Naive thymus-derived CD4-positive, alpha-beta T cell (primary cell): ENCODE measurements at regions of chr10 and their contacts with region 1.

Region 1: GRCh38 chr10:67764012-67764822 is 68.2 kb upstream of the CTNNA3 start:
- DNase-seq: peak; percentile 96 to 99 (median 98)
- ATAC-seq: peak; percentile 88
- H3K4me3 ChIP-seq: peak overlapping the region; percentile 99
- H3K4me3 Mint-ChIP-seq: peak overlapping the region; percentile 81 to 99 (median 94)
- H3K27ac ChIP-seq: peak overlapping the region; percentile 81
- H3K27ac Mint-ChIP-seq: peak overlapping the region; percentile 95 to 100 (median 100)
- H3K4me1 ChIP-seq: peaks cover 4 to 6% of the 10 kb centered on the region in 2 donors
- H3K4me1 Mint-ChIP-seq: peaks cover 0 to 37% (median 14%) of the 10 kb centered on the region in 7 donors
- H3K27me3 ChIP-seq: no peaks in the 10 kb centered on the region
- H3K27me3 Mint-ChIP-seq: peaks cover 0 to 16% (median 0%) of the 10 kb centered on the region in 5 donors

Region 2: GRCh38 chr10:67612577-67613537 is 151.4 kb before region 1 on chr10:
- CTCF ChIA-PET with region 1: no interaction called
- POLR2A ChIA-PET with region 1: no interaction called
- intact Hi-C with region 1: loop called (anchors 1 kb)
- DNase-seq: peak in 8 of 9 donors; percentile 53 to 82 (median 73)
- ATAC-seq: peak; percentile 97
- H3K4me3 ChIP-seq: peak overlapping the region; percentile 36
- H3K4me3 Mint-ChIP-seq: peak overlapping the region; percentile 64 to 83 (median 75)
- H3K27ac ChIP-seq: no peak overlapping the region
- H3K27ac Mint-ChIP-seq: peak overlapping the region; percentile 8 to 88 (median 79)
- H3K4me1 ChIP-seq: peaks cover 17 to 24% of the 10 kb centered on the region in 2 donors
- H3K4me1 Mint-ChIP-seq: peaks cover 23 to 44% (median 33%) of the 10 kb centered on the region in 7 donors
- H3K27me3 ChIP-seq: no peaks in the 10 kb centered on the region
- H3K27me3 Mint-ChIP-seq: peaks cover 0 to 29% (median 0%) of the 10 kb centered on the region in 5 donors

Region 3: GRCh38 chr10:67725567-67725966 is 38.6 kb before region 1 on chr10:
- CTCF ChIA-PET with region 1: no interaction called
- POLR2A ChIA-PET with region 1: no interaction called
- intact Hi-C with region 1: loop called in 1 of 2 experiments (anchors 2 kb)
- DNase-seq: no peak
- ATAC-seq: no peak
- H3K4me3 ChIP-seq: no peak overlapping the region
- H3K4me3 Mint-ChIP-seq: no peak overlapping the region
- H3K27ac ChIP-seq: no peak overlapping the region
- H3K27ac Mint-ChIP-seq: no peak overlapping the region
- H3K4me1 ChIP-seq: no peaks in the 10 kb centered on the region
- H3K4me1 Mint-ChIP-seq: no peaks in the 10 kb centered on the region
- H3K27me3 ChIP-seq: no peaks in the 10 kb centered on the region
- H3K27me3 Mint-ChIP-seq: peaks cover 0 to 11% (median 6%) of the 10 kb centered on the region in 5 donors

Region 4: DNA sequence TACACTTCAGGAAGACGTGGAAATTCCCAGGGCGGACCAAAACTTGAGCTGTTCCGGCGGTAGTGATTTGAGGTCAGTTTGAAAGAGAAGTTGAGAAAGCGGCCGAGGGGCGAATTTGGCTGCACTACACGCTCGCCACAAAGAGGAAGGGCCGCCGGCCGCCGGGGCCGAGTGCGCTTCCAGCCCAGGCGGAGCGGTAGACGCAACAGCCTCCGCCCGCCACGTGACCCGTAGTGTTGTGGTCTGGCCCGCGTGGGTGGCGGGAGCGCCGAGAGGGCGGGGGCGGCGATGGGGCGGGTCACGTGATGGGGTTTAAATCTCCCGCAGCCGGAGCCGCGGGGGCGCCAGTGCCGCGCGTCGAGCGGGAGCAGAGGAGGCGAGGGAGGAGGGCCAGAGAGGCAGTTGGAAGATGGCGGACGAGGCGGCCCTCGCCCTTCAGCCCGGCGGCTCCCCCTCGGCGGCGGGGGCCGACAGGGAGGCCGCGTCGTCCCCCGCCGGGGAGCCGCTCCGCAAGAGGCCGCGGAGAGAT is 120.2 kb after region 1 on chr10 and contains the start of gene SIRT1:
- CTCF ChIA-PET with region 1: no interaction called
- POLR2A ChIA-PET with region 1: interaction called, 3 read pairs
- intact Hi-C with region 1: loop called in 1 of 2 experiments (anchors 1 kb)
- DNase-seq: peak; percentile 87 to 95 (median 90)
- ATAC-seq: peak; percentile 89
- H3K4me3 ChIP-seq: peak within 1 kb of the TSS; percentile 75
- H3K4me3 Mint-ChIP-seq: peak within 1 kb of the TSS; percentile 86 to 98 (median 95)
- H3K27ac ChIP-seq: peak within 1 kb of the TSS; percentile 83
- H3K27ac Mint-ChIP-seq: peak within 1 kb of the TSS; percentile 90 to 98 (median 95)
- H3K4me1 ChIP-seq: peaks cover 12 to 16% of the 10 kb centered on the region in 2 donors
- H3K4me1 Mint-ChIP-seq: peaks cover 27 to 43% (median 35%) of the 10 kb centered on the region in 7 donors
- H3K27me3 ChIP-seq: no peaks in the 10 kb centered on the region
- H3K27me3 Mint-ChIP-seq: peaks cover 0 to 5% (median 0%) of the 10 kb centered on the region in 5 donors
- total RNA-seq, gene SIRT1: 25.9 to 66.8 (median 59.5) TPM

Region 5: DNA sequence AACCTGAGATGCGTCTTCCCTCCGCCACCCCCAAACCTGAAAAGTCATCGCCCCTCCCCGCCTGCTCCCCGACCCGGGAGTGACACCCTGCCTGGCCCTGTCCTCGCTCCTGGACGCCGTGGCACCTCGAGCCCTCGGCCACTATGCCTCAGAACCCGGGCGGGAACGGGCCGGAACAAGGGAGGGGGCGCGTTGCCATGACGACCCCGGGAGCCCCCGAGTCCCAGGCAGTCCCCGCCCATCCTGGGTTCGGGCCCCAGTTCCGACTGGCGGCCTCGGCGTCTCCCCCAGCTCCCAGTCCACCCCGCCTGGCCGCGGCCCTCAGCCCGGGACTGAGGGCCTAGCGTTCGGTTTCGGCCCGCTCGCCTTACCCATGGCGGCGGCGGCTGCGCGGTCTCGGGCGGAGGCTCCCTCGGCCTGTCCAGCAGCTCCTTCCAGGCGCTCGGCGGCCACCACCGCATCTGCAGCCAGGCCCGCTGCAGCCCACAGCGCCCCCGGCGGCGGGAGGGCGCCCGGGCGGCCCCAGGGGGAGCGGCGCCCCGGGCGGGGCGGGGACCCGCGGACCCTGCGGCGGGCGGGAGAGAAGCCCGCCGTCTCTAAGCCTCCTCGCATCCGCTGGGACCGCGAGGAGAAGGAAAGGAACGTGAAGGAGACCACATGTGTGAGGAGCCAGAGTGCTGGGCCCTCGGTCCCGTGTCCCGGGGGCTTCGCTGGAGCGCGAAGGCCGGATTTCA is 642.8 kb after region 1 on chr10 and contains the start of gene RUFY2:
- CTCF ChIA-PET with region 1: no interaction called
- POLR2A ChIA-PET with region 1: no interaction called
- intact Hi-C with region 1: loop called in 1 of 2 experiments (anchors 2 kb)
- DNase-seq: peak; percentile 61 to 91 (median 74)
- ATAC-seq: peak; percentile 98
- H3K4me3 ChIP-seq: peak within 1 kb of the TSS; percentile 73
- H3K4me3 Mint-ChIP-seq: peak within 1 kb of the TSS; percentile 85 to 96 (median 89)
- H3K27ac ChIP-seq: peak within 1 kb of the TSS; percentile 76
- H3K27ac Mint-ChIP-seq: peak within 1 kb of the TSS; percentile 62 to 90 (median 81)
- H3K4me1 ChIP-seq: peaks cover 3 to 7% of the 10 kb centered on the region in 2 donors
- H3K4me1 Mint-ChIP-seq: peaks cover 10 to 19% (median 17%) of the 10 kb centered on the region in 7 donors
- H3K27me3 ChIP-seq: no peaks in the 10 kb centered on the region
- H3K27me3 Mint-ChIP-seq: no peaks in the 10 kb centered on the region
- total RNA-seq, gene RUFY2: 15.1 to 24.7 (median 20.4) TPM